Activated CD4-positive, alpha-beta memory T cell treated with anti-CD3 and anti-CD28 coated beads, Interleukin-2, amount 10 ng/mL, durations not matched to agents 7 days and 5 days (primary cell): ENCODE measurements at regions of chr1 and their contacts with region 1.

Region 1: GRCh38 chr1:32650752-32651460 is at the start of gene RBBP4:
- DNase-seq: peak; percentile 99
- H3K4me3 Mint-ChIP-seq: peak within 1 kb of the TSS; percentile 99
- H3K27ac Mint-ChIP-seq: peak within 1 kb of the TSS; percentile 100
- H3K4me1 Mint-ChIP-seq: peaks cover 59% of the 10 kb centered on the region
- H3K27me3 Mint-ChIP-seq: no peaks in the 10 kb centered on the region
- total RNA-seq, gene RBBP4: 271 to 277 TPM

Region 2: GRCh38 chr1:32072622-32073298 is 578.1 kb before region 1 on chr1 and contains the start of gene TMEM39B:
- CTCF ChIA-PET with region 1: no interaction called
- POLR2A ChIA-PET with region 1: interaction called, 12 read pairs
- DNase-seq: peak; percentile 96
- H3K4me3 Mint-ChIP-seq: peak within 1 kb of the TSS; percentile 77
- H3K27ac Mint-ChIP-seq: peak within 1 kb of the TSS; percentile 83
- H3K4me1 Mint-ChIP-seq: peaks cover 46% of the 10 kb centered on the region
- H3K27me3 Mint-ChIP-seq: no peaks in the 10 kb centered on the region
- total RNA-seq, gene TMEM39B: 24.5 to 28.0 TPM

Region 3: GRCh38 chr1:32627596-32628162 is 23.2 kb before region 1 on chr1:
- CTCF ChIA-PET with region 1: interaction called, 9 read pairs
- POLR2A ChIA-PET with region 1: interaction called, 11 read pairs
- DNase-seq: peak; percentile 28
- H3K4me3 Mint-ChIP-seq: no peak overlapping the region
- H3K27ac Mint-ChIP-seq: peak overlapping the region; percentile 83
- H3K4me1 Mint-ChIP-seq: peaks cover 35% of the 10 kb centered on the region
- H3K27me3 Mint-ChIP-seq: no peaks in the 10 kb centered on the region

Region 4: DNA sequence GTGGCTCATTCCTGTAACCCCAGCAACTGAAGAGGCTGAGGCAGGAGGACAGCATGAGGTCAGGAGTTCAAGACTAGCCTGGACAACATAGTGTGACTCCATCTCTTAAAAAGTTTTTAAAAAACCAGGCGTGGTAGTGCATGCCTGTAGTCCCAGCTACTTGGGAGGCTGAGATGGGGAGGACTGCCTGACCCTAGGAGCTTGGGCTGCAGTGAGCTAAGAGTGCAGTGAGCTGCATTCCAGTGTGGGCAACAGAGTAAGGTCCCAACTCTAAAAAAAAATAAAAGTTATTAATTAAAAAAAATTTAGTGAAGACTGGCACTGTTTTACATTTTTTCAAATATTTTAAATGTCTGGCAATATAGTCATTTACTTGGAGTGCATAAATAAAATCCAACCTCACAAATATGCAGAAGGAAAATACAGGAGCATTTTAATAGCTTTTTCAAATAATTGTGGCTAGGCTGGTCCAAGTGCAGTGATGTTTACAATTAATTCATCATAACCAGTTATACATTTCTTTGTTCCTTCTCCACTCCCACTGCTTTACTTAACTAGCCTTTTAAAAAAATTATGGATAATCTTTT is 11.3 kb before region 1 on chr1:
- CTCF ChIA-PET with region 1: interaction called, 4 read pairs
- POLR2A ChIA-PET with region 1: interaction called, 22 read pairs
- DNase-seq: no peak
- H3K4me3 Mint-ChIP-seq: no peak overlapping the region
- H3K27ac Mint-ChIP-seq: no peak overlapping the region
- H3K4me1 Mint-ChIP-seq: peaks cover 11% of the 10 kb centered on the region
- H3K27me3 Mint-ChIP-seq: no peaks in the 10 kb centered on the region

Region 5: GRCh38 chr1:32666901-32667566 is 16.1 kb after region 1 on chr1:
- CTCF ChIA-PET with region 1: no interaction called
- POLR2A ChIA-PET with region 1: interaction called, 12 read pairs
- DNase-seq: no peak
- H3K4me3 Mint-ChIP-seq: no peak overlapping the region
- H3K27ac Mint-ChIP-seq: no peak overlapping the region
- H3K4me1 Mint-ChIP-seq: peaks cover 6% of the 10 kb centered on the region
- H3K27me3 Mint-ChIP-seq: no peaks in the 10 kb centered on the region

Region 6: GRCh38 chr1:32817159-32817814 is 166.4 kb after region 1 on chr1 and contains the starts of genes S100PBP and YARS1:
- CTCF ChIA-PET with region 1: no interaction called
- POLR2A ChIA-PET with region 1: interaction called, 32 read pairs
- DNase-seq: peak; percentile 100
- H3K4me3 Mint-ChIP-seq: peak within 1 kb of the TSS; percentile 93
- H3K27ac Mint-ChIP-seq: peak within 1 kb of the TSS; percentile 89
- H3K4me1 Mint-ChIP-seq: peaks cover 54% of the 10 kb centered on the region
- H3K27me3 Mint-ChIP-seq: no peaks in the 10 kb centered on the region
- total RNA-seq, gene S100PBP: 78.4 to 84.0 TPM
- total RNA-seq, gene YARS1: 204 to 214 TPM